Naive thymus-derived CD4-positive, alpha-beta T cell (primary cell): ENCODE measurements at regions of chr14 and their contacts with region 1.

Region 1: GRCh38 chr14:22589096-22589839 is at the start of gene DAD1:
- DNase-seq: peak; percentile 100
- ATAC-seq: peak; percentile 94
- H3K4me3 ChIP-seq: peak within 1 kb of the TSS; percentile 81
- H3K4me3 Mint-ChIP-seq: peak within 1 kb of the TSS; percentile 83 to 99 (median 96)
- H3K27ac ChIP-seq: peak within 1 kb of the TSS; percentile 96
- H3K27ac Mint-ChIP-seq: peak within 1 kb of the TSS; percentile 90 to 100 (median 99)
- H3K4me1 ChIP-seq: peaks cover 30 to 38% of the 10 kb centered on the region in 2 donors
- H3K4me1 Mint-ChIP-seq: peaks cover 34 to 62% (median 53%) of the 10 kb centered on the region in 7 donors
- H3K27me3 ChIP-seq: no peaks in the 10 kb centered on the region
- H3K27me3 Mint-ChIP-seq: peaks cover 0 to 17% (median 0%) of the 10 kb centered on the region in 5 donors
- total RNA-seq, gene DAD1: 68.8 to 157 (median 117) TPM

Region 2: GRCh38 chr14:21092273-21093011 is 1496.8 kb before region 1 on chr14:
- CTCF ChIA-PET with region 1: no interaction called
- POLR2A ChIA-PET with region 1: no interaction called
- intact Hi-C with region 1: loop called in 1 of 2 experiments (anchors 10 kb)
- DNase-seq: peak; percentile 82 to 98 (median 93)
- ATAC-seq: peak; percentile 90
- H3K4me3 ChIP-seq: no peak overlapping the region
- H3K4me3 Mint-ChIP-seq: peak overlapping the region in 1 of 10 donors; percentile 6
- H3K27ac ChIP-seq: no peak overlapping the region
- H3K27ac Mint-ChIP-seq: peak overlapping the region in 8 of 9 donors; percentile 17 to 88 (median 78)
- H3K4me1 ChIP-seq: peaks cover 6 to 14% of the 10 kb centered on the region in 2 donors
- H3K4me1 Mint-ChIP-seq: peaks cover 15 to 37% (median 27%) of the 10 kb centered on the region in 7 donors
- H3K27me3 ChIP-seq: no peaks in the 10 kb centered on the region
- H3K27me3 Mint-ChIP-seq: peaks cover 0 to 17% (median 0%) of the 10 kb centered on the region in 5 donors

Region 3: GRCh38 chr14:22026527-22026926 is 562.7 kb before region 1 on chr14:
- CTCF ChIA-PET with region 1: no interaction called
- POLR2A ChIA-PET with region 1: no interaction called
- intact Hi-C with region 1: no loop called
- DNase-seq: no peak
- ATAC-seq: no peak
- H3K4me3 ChIP-seq: no peak overlapping the region
- H3K4me3 Mint-ChIP-seq: peak overlapping the region in 3 of 10 donors; percentile 9 to 27 (median 18)
- H3K27ac ChIP-seq: no peak overlapping the region
- H3K27ac Mint-ChIP-seq: no peak overlapping the region
- H3K4me1 ChIP-seq: no peaks in the 10 kb centered on the region
- H3K4me1 Mint-ChIP-seq: peaks cover 0 to 7% (median 5%) of the 10 kb centered on the region in 7 donors
- H3K27me3 ChIP-seq: no peaks in the 10 kb centered on the region
- H3K27me3 Mint-ChIP-seq: peaks cover 0 to 15% (median 0%) of the 10 kb centered on the region in 5 donors

Region 4: DNA sequence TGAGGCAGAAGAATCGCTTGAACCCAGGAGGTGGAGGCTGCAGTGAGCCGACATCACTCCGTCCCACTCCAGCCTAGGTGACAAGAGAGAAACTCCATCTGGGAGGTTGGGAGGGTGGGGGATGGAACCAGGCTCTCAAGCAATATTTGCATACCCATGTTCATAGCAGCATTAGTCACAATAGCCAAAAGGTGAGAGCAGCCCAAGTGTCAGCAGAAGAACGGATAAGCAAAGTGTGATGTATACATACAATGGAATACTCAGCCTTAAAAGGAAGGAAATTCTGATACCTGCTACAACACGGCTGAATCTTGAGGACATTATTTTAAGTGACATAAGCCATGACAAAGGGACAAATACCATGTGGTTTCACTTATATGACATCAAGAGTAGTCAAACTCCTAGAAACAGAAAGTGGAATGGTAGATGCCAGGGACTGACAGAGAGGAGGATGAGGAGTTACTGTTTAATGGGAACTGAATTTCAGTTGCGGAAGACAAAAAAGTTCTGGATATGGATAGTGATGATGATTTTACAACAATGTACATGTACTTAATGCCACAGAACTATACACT is 11.8 kb before region 1 on chr14:
- CTCF ChIA-PET with region 1: interaction called, 52 read pairs
- POLR2A ChIA-PET with region 1: interaction called, 82 read pairs
- intact Hi-C with region 1: loop called (anchors 1 kb)
- DNase-seq: no peak
- ATAC-seq: no peak
- H3K4me3 ChIP-seq: no peak overlapping the region
- H3K4me3 Mint-ChIP-seq: peak overlapping the region in 8 of 10 donors; percentile 17 to 82 (median 34)
- H3K27ac ChIP-seq: no peak overlapping the region
- H3K27ac Mint-ChIP-seq: peak overlapping the region; percentile 2 to 95 (median 79)
- H3K4me1 ChIP-seq: peaks cover 3 to 13% of the 10 kb centered on the region in 2 donors
- H3K4me1 Mint-ChIP-seq: peaks cover 34 to 81% (median 63%) of the 10 kb centered on the region in 7 donors
- H3K27me3 ChIP-seq: no peaks in the 10 kb centered on the region
- H3K27me3 Mint-ChIP-seq: no peaks in the 10 kb centered on the region

Region 5: DNA sequence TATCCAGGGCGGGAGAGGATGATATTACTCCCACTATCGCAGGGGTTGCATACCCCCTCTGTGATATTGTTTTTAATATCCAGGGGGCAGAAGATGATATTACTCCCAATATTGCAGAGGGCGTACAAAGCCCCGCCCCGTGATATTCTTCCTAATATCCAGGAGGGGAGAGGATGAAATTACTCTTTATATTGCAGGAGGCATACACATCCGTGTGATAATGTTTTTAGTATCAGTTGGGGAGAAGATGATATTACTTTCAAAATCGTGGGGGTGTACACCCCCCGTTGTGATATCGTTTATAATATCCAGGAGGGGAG is 124.3 kb after region 1 on chr14:
- CTCF ChIA-PET with region 1: no interaction called
- POLR2A ChIA-PET with region 1: no interaction called
- intact Hi-C with region 1: loop called (anchors 1 to 5 kb)
- DNase-seq: no peak
- ATAC-seq: no peak
- H3K4me3 ChIP-seq: peak overlapping the region; percentile 34
- H3K4me3 Mint-ChIP-seq: peak overlapping the region; percentile 79 to 92 (median 88)
- H3K27ac ChIP-seq: no peak overlapping the region
- H3K27ac Mint-ChIP-seq: peak overlapping the region in 4 of 9 donors; percentile 32 to 76 (median 64)
- H3K4me1 ChIP-seq: peaks cover 4 to 6% of the 10 kb centered on the region in 2 donors
- H3K4me1 Mint-ChIP-seq: peaks cover 3 to 17% (median 11%) of the 10 kb centered on the region in 7 donors
- H3K27me3 ChIP-seq: no peaks in the 10 kb centered on the region
- H3K27me3 Mint-ChIP-seq: peaks cover 27 to 44% (median 34%) of the 10 kb centered on the region in 5 donors

Region 6: DNA sequence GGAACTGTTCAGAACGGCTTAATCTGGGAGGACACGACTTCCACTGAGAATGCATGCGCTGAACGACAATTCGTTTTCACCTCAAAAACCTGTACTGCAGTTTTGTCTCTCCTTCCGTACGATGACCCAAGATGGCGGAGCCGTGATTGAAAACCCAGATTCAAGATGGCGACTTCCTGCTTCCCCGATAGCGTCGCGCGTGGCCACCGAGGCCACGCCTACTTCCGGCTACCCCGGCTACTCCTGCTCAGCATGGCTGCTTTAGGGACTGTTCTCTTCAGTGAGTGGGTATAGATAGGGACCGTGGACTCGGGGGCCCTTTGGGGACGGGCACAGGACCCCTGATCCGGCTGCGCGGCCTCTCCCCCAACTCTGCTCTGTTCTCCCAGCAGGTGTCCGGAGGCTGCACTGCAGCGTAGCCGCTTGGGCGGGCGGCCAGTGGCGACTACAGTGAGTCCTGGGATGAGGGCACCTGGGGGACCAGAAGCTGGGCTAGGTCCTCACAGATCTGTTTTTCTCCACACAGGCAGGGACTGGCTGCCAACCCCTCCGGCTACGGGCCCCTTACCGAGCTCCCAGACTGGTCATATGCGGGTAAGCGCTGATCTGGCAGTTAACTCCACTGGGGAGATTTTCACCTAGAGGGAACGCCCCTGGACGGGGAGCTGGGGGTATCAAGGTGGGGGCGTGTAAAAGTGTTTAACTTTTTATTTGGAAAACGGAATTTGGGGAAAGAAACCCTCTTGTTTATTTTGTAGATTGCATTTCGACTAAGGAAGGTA is 240.6 kb after region 1 on chr14 and contains the start of gene MRPL52:
- CTCF ChIA-PET with region 1: no interaction called
- POLR2A ChIA-PET with region 1: interaction called, 14 read pairs
- intact Hi-C with region 1: loop called (anchors 1 to 5 kb)
- DNase-seq: peak; percentile 71 to 90 (median 88)
- ATAC-seq: peak; percentile 97
- H3K4me3 ChIP-seq: peak within 1 kb of the TSS; percentile 99
- H3K4me3 Mint-ChIP-seq: peak within 1 kb of the TSS; percentile 74 to 94 (median 91)
- H3K27ac ChIP-seq: peak within 1 kb of the TSS; percentile 95
- H3K27ac Mint-ChIP-seq: peak within 1 kb of the TSS; percentile 91 to 99 (median 97)
- H3K4me1 ChIP-seq: peaks cover 11 to 21% of the 10 kb centered on the region in 2 donors
- H3K4me1 Mint-ChIP-seq: peaks cover 11 to 39% (median 32%) of the 10 kb centered on the region in 7 donors
- H3K27me3 ChIP-seq: no peaks in the 10 kb centered on the region
- H3K27me3 Mint-ChIP-seq: peaks cover 0 to 2% (median 0%) of the 10 kb centered on the region in 5 donors
- total RNA-seq, gene MRPL52: 32.9 to 118 (median 48.2) TPM

Region 7: GRCh38 chr14:22872033-22872832 is 283.0 kb after region 1 on chr14:
- CTCF ChIA-PET with region 1: interaction called, 3 read pairs
- POLR2A ChIA-PET with region 1: interaction called, 3 read pairs
- intact Hi-C with region 1: loop called (anchors 1 to 5 kb)
- DNase-seq: peak; percentile 55 to 76 (median 69)
- ATAC-seq: peak; percentile 57
- H3K4me3 ChIP-seq: peak overlapping the region; percentile 72
- H3K4me3 Mint-ChIP-seq: peak overlapping the region; percentile 87 to 98 (median 95)
- H3K27ac ChIP-seq: peak overlapping the region; percentile 86
- H3K27ac Mint-ChIP-seq: peak overlapping the region; percentile 83 to 98 (median 94)
- H3K4me1 ChIP-seq: peaks cover 20 to 33% of the 10 kb centered on the region in 2 donors
- H3K4me1 Mint-ChIP-seq: peaks cover 26 to 49% (median 29%) of the 10 kb centered on the region in 7 donors
- H3K27me3 ChIP-seq: no peaks in the 10 kb centered on the region
- H3K27me3 Mint-ChIP-seq: no peaks in the 10 kb centered on the region

Region 8: GRCh38 chr14:22929104-22929847 is 340.0 kb after region 1 on chr14 and contains the start of gene PRMT5:
- CTCF ChIA-PET with region 1: interaction called, 3 read pairs
- POLR2A ChIA-PET with region 1: no interaction called
- intact Hi-C with region 1: loop called in 1 of 2 experiments (anchors 1 kb)
- DNase-seq: peak; percentile 81 to 100 (median 99)
- ATAC-seq: peak; percentile 97
- H3K4me3 ChIP-seq: peak within 1 kb of the TSS; percentile 91
- H3K4me3 Mint-ChIP-seq: no peak within 1 kb of the TSS
- H3K27ac ChIP-seq: peak within 1 kb of the TSS; percentile 91
- H3K27ac Mint-ChIP-seq: no peak within 1 kb of the TSS
- H3K4me1 ChIP-seq: peaks cover 9 to 17% of the 10 kb centered on the region in 2 donors
- H3K4me1 Mint-ChIP-seq: peaks cover 5 to 36% (median 20%) of the 10 kb centered on the region in 7 donors
- H3K27me3 ChIP-seq: no peaks in the 10 kb centered on the region
- H3K27me3 Mint-ChIP-seq: no peaks in the 10 kb centered on the region
- total RNA-seq, gene PRMT5: 24.9 to 82.8 (median 34.2) TPM